GM12878 (cell line): ENCODE measurements at regions of chr17 and their contacts with region 1.

Region 1: DNA sequence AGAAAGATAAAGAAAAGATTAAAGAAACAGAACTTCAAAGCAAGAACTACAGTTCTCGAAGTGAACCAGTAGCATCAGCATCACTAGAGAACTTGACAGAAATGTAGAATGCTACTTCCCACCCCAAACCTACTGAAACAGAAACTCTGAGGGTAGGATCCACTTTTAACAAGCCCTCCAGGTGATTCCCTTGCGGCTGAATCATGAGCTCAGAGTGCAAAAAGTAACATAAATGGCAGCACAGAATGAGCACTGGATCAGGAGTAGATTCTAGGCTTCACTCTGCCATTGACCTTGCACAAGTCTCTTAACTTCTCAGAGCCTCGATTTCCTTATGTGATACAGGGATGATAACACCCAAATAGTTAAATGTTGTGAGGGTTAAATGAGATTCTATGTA is 5.8 kb downstream of the TOM1L2 start:
- DNase-seq: peak; percentile 31
- ATAC-seq: peak; percentile 86
- H3K4me3 ChIP-seq: no peak overlapping the region
- H3K27ac ChIP-seq: no peak overlapping the region
- H3K4me1 ChIP-seq: peaks cover 8% of the 10 kb centered on the region
- H3K27me3 ChIP-seq: no peaks in the 10 kb centered on the region
- CTCF ChIP-seq: no peak
- EP300 ChIP-seq: no peak
- POLR2A ChIP-seq: no peak
- RAD21 ChIP-seq: no peak

Region 2: GRCh38 chr17:17890773-17891759 is 75.3 kb before region 1 on chr17:
- CTCF ChIA-PET with region 1: interaction called, 5 read pairs
- POLR2A ChIA-PET with region 1: no interaction called
- RAD21 ChIA-PET with region 1: no interaction called
- SMC1A ChIA-PET with region 1: interaction called, 4 read pairs
- in situ Hi-C with region 1: no loop called
- intact Hi-C with region 1: loop called (anchors 5 kb)
- DNase-seq: no peak
- ATAC-seq: peak; percentile 97
- H3K4me3 ChIP-seq: no peak overlapping the region
- H3K27ac ChIP-seq: no peak overlapping the region
- H3K4me1 ChIP-seq: peaks cover 19% of the 10 kb centered on the region
- H3K27me3 ChIP-seq: no peaks in the 10 kb centered on the region
- CTCF ChIP-seq: peak; percentile 71 to 83 (median 74)
- EP300 ChIP-seq: no peak
- POLR2A ChIP-seq: no peak
- RAD21 ChIP-seq: peak; percentile 85

Region 3: DNA sequence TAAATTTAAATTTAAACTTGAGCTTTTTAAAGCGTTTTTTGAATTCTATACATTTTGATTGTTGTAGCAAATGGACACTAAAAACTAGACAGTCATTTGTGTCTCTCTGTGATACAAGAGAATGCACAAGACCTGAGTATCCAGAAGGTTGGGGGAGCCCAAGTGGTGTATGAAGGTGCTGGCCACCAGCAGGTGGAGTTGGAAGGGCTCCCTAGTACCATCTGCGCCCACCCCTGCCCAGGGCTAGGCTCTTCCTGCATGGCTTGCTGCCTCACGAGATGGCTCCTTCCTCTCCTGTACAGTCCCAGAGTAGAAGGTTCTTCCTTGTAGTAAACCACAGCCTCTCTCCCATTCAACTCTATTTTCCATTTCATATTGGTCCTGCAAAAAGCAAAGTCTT is 89.8 kb after region 1 on chr17:
- CTCF ChIA-PET with region 1: no interaction called
- POLR2A ChIA-PET with region 1: no interaction called
- RAD21 ChIA-PET with region 1: no interaction called
- SMC1A ChIA-PET with region 1: no interaction called
- in situ Hi-C with region 1: no loop called
- intact Hi-C with region 1: no loop called
- DNase-seq: no peak
- ATAC-seq: no peak
- H3K4me3 ChIP-seq: no peak overlapping the region
- H3K27ac ChIP-seq: no peak overlapping the region
- H3K4me1 ChIP-seq: no peaks in the 10 kb centered on the region
- H3K27me3 ChIP-seq: no peaks in the 10 kb centered on the region
- CTCF ChIP-seq: no peak
- EP300 ChIP-seq: no peak
- POLR2A ChIP-seq: no peak
- RAD21 ChIP-seq: no peak

Region 4: DNA sequence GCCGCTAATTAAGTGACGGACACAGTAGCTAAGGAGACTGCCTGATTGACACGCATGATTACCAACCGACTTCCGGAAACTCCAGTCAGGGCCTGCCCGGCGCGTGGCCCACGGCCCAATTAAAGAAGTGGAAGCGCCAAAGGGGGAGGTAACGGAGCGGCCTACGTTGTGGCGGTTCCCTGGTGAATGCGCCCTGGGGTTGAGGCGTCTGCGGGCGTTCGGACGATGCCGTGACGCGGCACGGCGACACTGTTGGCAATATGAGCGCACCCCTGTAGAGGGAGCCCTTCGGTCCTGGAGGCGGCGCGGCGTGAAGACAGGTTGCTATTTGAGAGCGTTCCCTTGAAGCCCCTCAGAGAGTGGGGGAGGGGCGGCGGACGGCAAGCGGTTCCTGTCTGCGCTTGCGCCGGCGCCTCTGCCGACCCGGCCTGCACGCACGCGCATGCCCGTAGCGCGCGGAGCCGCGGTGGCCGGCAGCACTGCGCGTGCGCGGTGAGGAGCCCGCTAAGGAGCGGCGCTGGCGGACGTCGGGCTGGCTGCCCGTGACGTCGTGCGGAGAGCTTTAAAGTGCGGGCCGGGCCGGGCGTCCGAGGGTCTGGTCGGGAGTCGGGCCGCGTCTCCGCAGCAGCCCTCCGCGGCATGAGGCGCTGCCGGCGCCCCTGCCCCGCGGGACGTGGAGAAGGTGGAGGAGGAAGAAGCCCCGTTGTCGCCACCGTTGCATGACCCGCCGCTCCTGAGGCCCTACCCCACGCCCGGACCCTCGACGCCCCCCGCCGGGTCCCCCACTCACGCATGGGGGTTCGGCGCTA is 217.1 kb after region 1 on chr17 and contains the start of gene ALKBH5:
- CTCF ChIA-PET with region 1: no interaction called
- POLR2A ChIA-PET with region 1: no interaction called
- RAD21 ChIA-PET with region 1: no interaction called
- SMC1A ChIA-PET with region 1: no interaction called
- in situ Hi-C with region 1: no loop called
- intact Hi-C with region 1: no loop called
- DNase-seq: peak; percentile 97
- ATAC-seq: peak; percentile 88
- H3K4me3 ChIP-seq: peak within 1 kb of the TSS; percentile 83
- H3K27ac ChIP-seq: peak within 1 kb of the TSS; percentile 97
- H3K4me1 ChIP-seq: peaks cover 11% of the 10 kb centered on the region
- H3K27me3 ChIP-seq: no peaks in the 10 kb centered on the region
- CTCF ChIP-seq: peak; percentile 35 to 54 (median 45); a peak in 5 of 6 replicates
- EP300 ChIP-seq: no peak
- POLR2A ChIP-seq: peak; percentile 77
- RAD21 ChIP-seq: no peak
- polyA plus RNA-seq, gene ALKBH5: 13.7 to 31.8 TPM